ENCODE measurements at regions of chr2 and their contacts with region 1.

Region 1: GRCh38 chr2:219530048-219530963 is 13.3 kb downstream of the CHPF start:
- DNase-seq: no peak
- H3K4me3 ChIP-seq: peak overlapping the region; percentile 49
- CTCF ChIP-seq: peak; percentile 98

Region 2: DNA sequence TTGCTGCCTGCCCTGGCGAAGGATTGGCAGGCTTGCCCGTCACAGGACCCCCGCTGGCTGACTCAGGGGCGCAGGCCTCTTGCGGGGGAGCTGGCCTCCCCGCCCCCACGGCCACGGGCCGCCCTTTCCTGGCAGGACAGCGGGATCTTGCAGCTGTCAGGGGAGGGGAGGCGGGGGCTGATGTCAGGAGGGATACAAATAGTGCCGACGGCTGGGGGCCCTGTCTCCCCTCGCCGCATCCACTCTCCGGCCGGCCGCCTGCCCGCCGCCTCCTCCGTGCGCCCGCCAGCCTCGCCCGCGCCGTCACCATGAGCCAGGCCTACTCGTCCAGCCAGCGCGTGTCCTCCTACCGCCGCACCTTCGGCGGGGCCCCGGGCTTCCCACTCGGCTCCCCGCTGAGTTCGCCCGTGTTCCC is 112.1 kb before region 1 on chr2 and contains the start of gene DES:
- CTCF ChIA-PET with region 1: interaction called, 14 read pairs
- POLR2A ChIA-PET with region 1: no interaction called
- DNase-seq: no peak
- H3K4me3 ChIP-seq: no peak within 1 kb of the TSS
- CTCF ChIP-seq: no peak

Region 3: DNA sequence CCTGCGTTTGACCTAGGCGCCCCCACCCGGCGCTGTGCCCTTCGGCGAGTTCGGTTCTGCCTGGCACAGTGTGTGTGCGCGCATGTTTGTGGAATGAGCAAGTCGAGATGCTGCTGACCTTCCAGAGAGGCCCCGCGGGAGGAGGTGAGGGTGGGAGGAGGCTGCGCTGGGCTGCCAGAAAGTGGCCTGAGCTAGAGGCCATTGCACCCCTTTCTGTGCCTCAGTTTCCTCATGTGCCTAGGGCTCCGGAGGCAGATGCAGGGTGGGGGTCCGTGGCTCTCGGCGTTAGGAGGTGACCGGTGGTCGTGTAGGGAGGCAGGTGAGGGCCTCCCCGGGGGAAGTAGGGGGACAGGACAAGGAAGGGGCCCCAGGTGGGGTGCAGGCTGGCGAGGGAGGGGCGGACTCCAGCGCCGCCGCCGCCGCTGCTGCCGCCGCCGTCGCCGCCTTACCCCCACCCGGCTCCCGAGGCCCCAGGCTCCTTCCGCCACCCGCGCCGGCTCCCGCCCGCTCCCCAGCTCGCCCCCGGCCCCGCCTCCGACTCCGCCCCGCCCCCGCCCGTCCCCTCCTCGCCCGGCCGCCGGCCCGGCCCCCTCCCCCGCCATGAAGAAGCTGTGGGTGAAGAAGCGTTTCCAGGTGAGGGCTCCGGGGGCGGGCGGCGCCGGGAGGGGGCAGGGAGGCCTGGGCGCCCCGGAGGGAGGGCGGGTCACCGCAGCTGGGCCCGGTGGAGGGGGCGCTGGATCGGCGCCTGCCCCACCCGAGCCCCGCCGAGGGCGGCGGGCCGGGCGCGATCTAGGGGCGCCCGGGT is 88.7 kb before region 1 on chr2:
- CTCF ChIA-PET with region 1: interaction called, 27 read pairs
- POLR2A ChIA-PET with region 1: no interaction called
- DNase-seq: no peak
- H3K4me3 ChIP-seq: peak overlapping the region; percentile 66
- CTCF ChIP-seq: no peak

Region 4: GRCh38 chr2:219475697-219476651 is 54.3 kb before region 1 on chr2:
- CTCF ChIA-PET with region 1: interaction called, 178 read pairs
- POLR2A ChIA-PET with region 1: no interaction called
- DNase-seq: no peak
- H3K4me3 ChIP-seq: no peak overlapping the region
- CTCF ChIP-seq: peak; percentile 86

Region 5: GRCh38 chr2:219543601-219544358 is 13.5 kb after region 1 on chr2 and contains the starts of genes CHPF and TMEM198:
- CTCF ChIA-PET with region 1: interaction called, 206 read pairs
- POLR2A ChIA-PET with region 1: interaction called, 4 read pairs
- DNase-seq: peak; percentile 87
- H3K4me3 ChIP-seq: peak within 1 kb of the TSS; percentile 80
- CTCF ChIP-seq: no peak